ENCODE measurements at regions of chr1 and their contacts with region 1.

Region 1: DNA sequence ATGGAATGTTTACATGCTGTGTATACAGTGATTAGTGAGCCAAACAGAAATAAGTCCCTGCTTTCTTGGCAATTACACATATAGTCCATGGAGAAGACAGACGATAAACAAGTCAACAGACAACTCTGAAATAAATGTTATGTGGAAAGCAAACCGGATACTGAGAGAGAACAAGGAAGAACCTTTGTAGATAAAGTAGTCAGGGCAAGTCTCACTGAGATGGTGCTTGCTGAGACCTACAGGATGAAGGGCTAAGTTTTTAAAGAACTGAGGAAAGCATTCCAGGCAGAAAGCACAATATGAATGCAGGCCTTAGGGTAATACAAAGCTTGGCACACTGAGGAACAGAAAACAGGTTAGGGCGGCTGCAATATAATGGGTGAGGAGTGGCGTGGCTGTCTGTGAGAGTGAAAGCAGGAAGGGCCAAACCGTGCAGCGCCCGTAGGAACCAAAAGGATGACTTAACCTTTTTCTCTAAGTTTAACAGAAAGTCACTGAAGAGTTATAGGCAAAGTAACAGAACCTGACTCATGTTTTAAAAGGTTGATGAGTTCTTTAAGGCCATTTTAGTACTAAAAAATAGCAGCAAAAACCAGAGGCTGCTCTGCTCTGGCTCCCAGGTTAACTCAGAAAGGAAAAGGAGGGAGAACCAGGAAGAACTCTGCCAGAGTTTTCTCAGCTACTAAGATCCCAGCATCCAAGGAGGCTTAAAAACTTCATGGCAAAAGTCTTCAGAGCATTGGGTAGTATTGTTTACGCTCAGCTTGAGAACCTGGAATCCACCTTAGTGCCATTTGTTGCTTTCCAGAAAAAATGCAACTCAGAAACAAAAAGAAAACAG is 8.7 kb upstream of the TTF2 start:
- DNase-seq: no peak
- ATAC-seq: peak; percentile 56

Region 2: DNA sequence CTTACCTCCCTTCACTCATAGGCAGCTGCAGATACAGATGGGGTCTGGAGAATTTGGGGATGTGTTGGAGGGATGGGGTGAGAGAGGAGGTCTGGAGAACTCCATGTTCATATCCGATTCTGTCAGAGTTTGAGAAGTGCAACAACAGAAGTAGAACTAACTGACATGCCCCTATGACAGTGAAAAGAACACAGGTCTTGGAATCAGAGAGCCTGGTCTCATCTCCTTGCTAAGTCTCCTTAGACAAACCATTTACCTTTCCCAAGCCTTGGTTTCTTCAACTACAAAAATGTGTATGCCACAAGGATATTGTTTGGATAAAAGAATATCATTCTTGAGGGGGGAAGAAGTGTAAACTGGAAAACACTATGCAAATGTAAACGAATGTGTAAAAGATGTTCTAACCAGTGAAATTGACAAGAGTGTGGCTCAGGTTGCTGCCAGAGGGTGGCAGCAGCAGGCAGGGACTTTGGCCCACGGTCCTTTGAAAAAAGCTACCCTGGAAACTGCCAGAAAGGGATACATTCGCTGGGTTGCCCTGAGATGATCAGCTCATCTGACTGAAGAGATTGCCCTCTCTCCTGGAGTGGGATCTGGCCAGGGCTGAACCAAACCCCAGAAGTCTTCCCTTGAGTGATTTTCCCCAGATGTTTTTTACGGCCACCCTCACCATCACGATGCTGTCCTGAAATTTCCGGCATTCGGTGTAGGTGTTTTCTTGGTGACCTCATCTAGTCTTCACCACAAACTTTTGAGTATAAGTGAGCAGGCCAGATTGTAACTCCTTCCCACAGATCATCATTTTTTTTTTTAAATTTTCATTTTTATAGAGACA is 314.2 kb before region 1 on chr1:
- intact Hi-C with region 1: loop called (anchors 5 kb)
- DNase-seq: peak; percentile 62
- ATAC-seq: peak; percentile 82

Region 3: DNA sequence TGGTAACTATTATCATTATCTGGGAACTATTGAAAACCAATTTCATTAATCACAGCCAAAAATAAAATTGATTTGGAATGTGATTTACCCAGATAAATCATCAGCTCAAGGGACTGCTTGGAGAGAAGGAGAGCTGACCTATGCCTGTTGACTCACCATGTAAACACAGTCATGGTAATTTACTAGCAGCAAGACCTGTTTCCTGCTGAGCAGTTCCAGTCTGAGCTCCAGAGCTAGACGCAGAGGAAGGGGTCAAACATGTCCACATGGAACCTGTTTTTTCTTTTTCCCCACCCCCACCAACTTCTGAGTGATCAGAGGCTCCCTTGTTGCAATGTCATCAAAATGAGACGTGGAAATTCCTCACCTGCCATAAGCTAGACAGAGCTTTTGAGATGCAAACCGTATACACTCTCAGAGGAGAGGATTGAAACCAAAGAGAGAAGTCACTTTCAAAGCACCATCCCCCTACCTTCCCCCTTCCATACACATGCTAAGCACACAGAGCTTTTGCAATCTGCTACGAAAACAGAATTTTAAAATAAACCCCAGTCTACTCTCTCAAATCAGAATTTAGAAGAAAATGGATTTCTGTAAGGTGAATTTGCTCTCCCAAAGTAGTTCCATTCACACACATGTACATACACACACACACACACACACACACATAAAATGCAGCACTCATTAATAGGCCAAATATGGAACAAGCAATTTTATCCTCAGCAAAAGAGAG is 197.6 kb before region 1 on chr1:
- intact Hi-C with region 1: loop called (anchors 5 kb)
- DNase-seq: no peak
- ATAC-seq: no peak

Measured in Right ventricle myocardium superior (tissue), 1 donor.